ENCODE measurements at regions of chr19 and their contacts with region 1.

Region 1: DNA sequence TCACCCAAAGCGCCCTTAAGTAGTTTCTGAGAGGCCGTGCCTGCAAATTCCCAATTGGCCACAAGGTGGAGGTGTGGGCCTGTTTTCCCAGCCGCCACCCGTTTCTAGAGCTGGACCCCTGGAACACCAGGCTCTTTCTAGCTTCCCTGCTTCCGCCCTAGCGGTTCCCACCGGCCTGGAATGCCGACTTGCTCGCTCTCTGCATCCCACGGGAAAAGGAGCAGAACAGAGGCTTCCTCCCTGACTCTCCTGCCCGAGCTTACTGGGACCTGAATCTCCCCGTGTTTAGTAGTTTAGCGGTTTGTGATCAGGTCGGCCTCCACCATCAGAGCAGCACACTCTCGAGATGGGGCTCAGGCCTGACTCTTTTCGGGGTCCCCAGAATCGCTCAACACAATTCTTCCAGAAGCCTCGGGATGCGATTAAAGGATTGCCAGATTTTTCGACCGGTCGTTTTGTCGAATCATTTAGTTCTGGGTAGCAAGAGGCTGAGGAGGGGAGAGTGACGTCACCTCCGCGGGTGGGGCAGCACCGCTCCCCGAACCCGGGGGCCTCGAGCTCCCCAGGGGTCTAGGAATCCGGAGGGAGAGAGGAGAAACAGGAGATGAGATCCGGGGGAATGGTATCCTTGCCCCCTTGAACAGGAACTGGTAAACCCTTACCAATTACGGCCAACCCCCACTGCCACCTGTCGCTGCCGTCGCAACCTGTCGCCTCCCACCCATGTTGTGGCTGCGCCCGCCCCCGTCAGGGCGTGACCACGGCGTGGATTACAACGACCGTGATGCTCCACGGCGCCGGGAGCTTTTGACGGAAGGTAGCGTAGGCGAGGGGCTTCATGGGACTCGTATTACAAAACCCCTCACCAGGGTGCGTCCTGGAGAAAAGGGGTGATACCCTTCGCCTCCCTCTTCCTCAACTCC is 8.0 kb downstream of the NAPSA start:
- DNase-seq: no peak
- ATAC-seq: peak; percentile 85
- H3K4me3 ChIP-seq: no peak overlapping the region
- H3K27ac ChIP-seq: no peak overlapping the region
- H3K4me1 ChIP-seq: peaks cover 0 to 3% of the 10 kb centered on the region in 2 experiments; a peak in 1 of 4 replicates
- H3K27me3 ChIP-seq: no peaks in the 10 kb centered on the region
- CTCF ChIP-seq: peak; percentile 67 to 84 (median 83)
- POLR2A ChIP-seq: no peak
- RAD21 ChIP-seq: peak; percentile 81

Region 2: GRCh38 chr19:50461066-50461875 is 103.8 kb after region 1 on chr19:
- CTCF ChIA-PET with region 1: interaction called, 8 read pairs
- POLR2A ChIA-PET with region 1: no interaction called
- RAD21 ChIA-PET with region 1: no interaction called
- intact Hi-C with region 1: loop called (anchors 2 kb)
- DNase-seq: peak; percentile 48
- ATAC-seq: peak; percentile 74
- H3K4me3 ChIP-seq: peak overlapping the region in 1 of 2 experiments; percentile 38; a peak in 2 of 4 replicates
- H3K27ac ChIP-seq: no peak overlapping the region
- H3K4me1 ChIP-seq: peaks cover 13 to 36% of the 10 kb centered on the region in 2 experiments
- H3K27me3 ChIP-seq: no peaks in the 10 kb centered on the region
- CTCF ChIP-seq: peak; percentile 81 to 85 (median 82)
- POLR2A ChIP-seq: no peak
- RAD21 ChIP-seq: peak; percentile 86

Measured in HCT116 (cell line).